B cell (primary cell): ENCODE measurements at regions of chr4 and their contacts with region 1.

Region 1: DNA sequence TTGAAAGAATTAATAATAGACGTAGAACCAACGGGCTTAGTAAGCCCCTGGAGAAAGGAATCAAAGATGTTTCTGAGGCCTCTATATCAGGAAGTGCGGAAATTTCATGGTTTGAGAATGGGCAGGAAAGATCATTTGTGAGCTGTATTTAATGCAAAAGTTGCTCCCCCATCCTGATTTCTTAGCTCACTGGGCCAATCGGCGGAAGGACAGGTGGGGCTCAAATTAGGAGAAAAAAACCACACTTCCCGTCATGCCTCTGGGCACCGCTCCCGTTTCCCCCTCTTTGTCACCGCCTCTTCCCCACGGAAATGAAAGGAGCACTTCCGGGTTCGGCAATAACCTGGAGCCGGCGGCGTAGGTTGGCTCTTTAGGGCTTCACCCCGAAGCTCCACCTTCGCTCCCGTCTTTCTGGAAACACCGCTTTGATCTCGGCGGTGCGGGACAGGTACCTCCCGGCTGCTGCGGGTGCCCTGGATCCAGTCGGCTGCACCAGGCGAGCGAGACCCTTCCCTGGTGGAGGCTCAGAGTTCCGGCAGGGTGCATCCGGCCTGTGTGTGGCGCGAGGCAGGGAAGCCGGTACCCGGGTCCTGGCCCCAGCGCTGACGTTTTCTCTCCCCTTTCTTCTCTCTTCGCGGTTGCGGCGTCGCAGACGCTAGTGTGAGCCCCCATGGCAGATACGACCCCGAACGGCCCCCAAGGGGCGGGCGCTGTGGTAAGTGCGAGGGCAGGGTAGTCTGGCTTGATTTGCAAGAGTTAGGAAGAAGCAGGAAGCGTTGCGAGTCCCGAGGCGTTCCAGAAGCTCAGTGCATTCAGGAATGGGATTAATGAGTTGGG is at the start of gene TMEM33:
- DNase-seq: peak; percentile 85
- ATAC-seq: peak; percentile 92
- H3K4me3 ChIP-seq: peak within 1 kb of the TSS; percentile 66 to 99 (median 85)
- H3K4me3 Mint-ChIP-seq: peak within 1 kb of the TSS; percentile 90
- H3K27ac ChIP-seq: peak within 1 kb of the TSS; percentile 57 to 79
- H3K27ac Mint-ChIP-seq: peak within 1 kb of the TSS; percentile 79
- H3K4me1 ChIP-seq: peaks cover 11 to 19% of the 10 kb centered on the region in 2 donors
- H3K4me1 Mint-ChIP-seq: peaks cover 34% of the 10 kb centered on the region
- H3K27me3 ChIP-seq: no peaks in the 10 kb centered on the region
- H3K27me3 Mint-ChIP-seq: no peaks in the 10 kb centered on the region
- CTCF ChIP-seq: no peak
- total RNA-seq, gene TMEM33: 36.9 and 39.2 TPM in 2 replicates

Region 2: DNA sequence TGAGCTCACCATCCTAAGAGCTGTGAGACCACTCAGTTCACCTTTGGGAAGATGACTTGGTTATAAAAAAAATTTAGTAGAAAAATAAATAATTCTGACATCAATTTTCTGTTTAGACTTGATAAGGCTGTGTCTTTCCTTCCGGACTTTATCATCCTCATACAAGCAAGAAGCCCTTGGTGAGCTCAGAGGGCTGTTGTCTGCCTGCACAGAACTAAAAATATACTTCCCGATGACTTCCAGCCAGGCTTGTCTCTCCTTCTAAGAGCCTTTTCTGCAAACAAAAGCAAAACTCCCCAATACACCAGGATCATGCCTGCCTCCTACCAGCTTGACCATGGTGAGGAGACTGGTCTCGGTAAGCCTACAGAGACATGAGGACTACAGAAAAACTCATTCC is 128.2 kb before region 1 on chr4:
- CTCF ChIA-PET with region 1: no interaction called
- POLR2A ChIA-PET with region 1: no interaction called
- intact Hi-C with region 1: no loop called
- DNase-seq: no peak
- ATAC-seq: no peak
- H3K4me3 ChIP-seq: no peak overlapping the region
- H3K4me3 Mint-ChIP-seq: no peak overlapping the region
- H3K27ac ChIP-seq: no peak overlapping the region
- H3K27ac Mint-ChIP-seq: no peak overlapping the region
- H3K4me1 ChIP-seq: no peaks in the 10 kb centered on the region
- H3K4me1 Mint-ChIP-seq: no peaks in the 10 kb centered on the region
- H3K27me3 ChIP-seq: no peaks in the 10 kb centered on the region
- H3K27me3 Mint-ChIP-seq: peaks cover 20% of the 10 kb centered on the region
- CTCF ChIP-seq: no peak

Region 3: DNA sequence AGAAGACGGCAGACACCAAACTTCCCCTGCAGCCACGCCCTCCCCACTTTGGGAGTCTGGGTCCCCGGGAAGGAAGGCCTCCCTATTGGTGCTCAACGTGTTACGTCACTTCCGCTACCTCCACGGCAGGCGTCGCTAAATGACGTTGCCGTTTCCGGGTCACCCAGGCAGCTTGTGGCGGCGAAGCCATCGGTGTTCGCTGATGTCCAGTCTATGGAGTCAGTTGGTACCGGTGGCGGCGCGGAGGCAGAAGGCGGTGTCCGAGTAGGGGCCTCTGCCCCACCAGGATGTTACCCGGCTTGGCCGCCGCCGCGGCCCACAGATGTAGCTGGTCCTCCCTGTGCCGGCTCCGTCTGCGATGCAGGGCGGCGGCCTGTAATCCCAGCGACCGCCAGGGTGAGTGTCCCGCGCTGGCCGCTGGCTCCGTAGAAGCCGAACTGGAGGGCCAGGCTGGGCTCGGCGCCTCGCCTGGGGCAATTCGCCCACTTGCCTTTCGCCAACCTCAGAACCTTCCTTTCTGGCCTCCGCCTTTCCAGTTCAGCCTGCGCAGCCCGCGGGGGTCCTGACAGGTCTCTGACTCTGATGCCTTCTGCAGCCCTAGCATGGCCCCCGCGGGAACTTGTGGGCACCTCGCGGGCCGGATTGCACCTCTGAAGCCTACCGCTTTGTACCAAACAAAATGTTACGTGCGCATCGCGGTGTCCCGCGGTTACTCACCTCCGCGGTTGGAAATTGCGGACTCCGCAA is 55.5 kb after region 1 on chr4 and contains the start of gene SLC30A9:
- CTCF ChIA-PET with region 1: interaction called, 4 read pairs
- POLR2A ChIA-PET with region 1: interaction called, 4 read pairs
- intact Hi-C with region 1: loop called (anchors 1 kb)
- DNase-seq: peak; percentile 97
- ATAC-seq: peak; percentile 92
- H3K4me3 ChIP-seq: peak within 1 kb of the TSS; percentile 58 to 96 (median 88)
- H3K4me3 Mint-ChIP-seq: peak within 1 kb of the TSS; percentile 100
- H3K27ac ChIP-seq: peak within 1 kb of the TSS; percentile 84 to 92
- H3K27ac Mint-ChIP-seq: peak within 1 kb of the TSS; percentile 96
- H3K4me1 ChIP-seq: peaks cover 14 to 20% of the 10 kb centered on the region in 2 donors
- H3K4me1 Mint-ChIP-seq: peaks cover 23% of the 10 kb centered on the region
- H3K27me3 ChIP-seq: no peaks in the 10 kb centered on the region
- H3K27me3 Mint-ChIP-seq: no peaks in the 10 kb centered on the region
- CTCF ChIP-seq: peak; percentile 48
- total RNA-seq, gene SLC30A9: 35.2 and 37.0 TPM in 2 replicates